Sigmoid colon (tissue), 7 donors: ENCODE measurements at regions of chr17 and their contacts with region 1.

Region 1: GRCh38 chr17:22251498-22251897 is 559.2 kb downstream of the KCNJ18 start:
- DNase-seq: no peak
- H3K4me3 ChIP-seq: no peak overlapping the region
- H3K27ac ChIP-seq: no peak overlapping the region
- H3K4me1 ChIP-seq: no peaks in the 10 kb centered on the region
- H3K27me3 ChIP-seq: no peaks in the 10 kb centered on the region
- CTCF ChIP-seq: no peak
- EP300 ChIP-seq: no peak
- POLR2A ChIP-seq: no peak

Region 2: GRCh38 chr17:22202702-22203101 is 48.8 kb before region 1 on chr17:
- intact Hi-C with region 1: loop called (anchors 10 kb)
- DNase-seq: no peak
- H3K4me3 ChIP-seq: no peak overlapping the region
- H3K27ac ChIP-seq: no peak overlapping the region
- H3K4me1 ChIP-seq: no peaks in the 10 kb centered on the region
- H3K27me3 ChIP-seq: no peaks in the 10 kb centered on the region
- CTCF ChIP-seq: no peak
- EP300 ChIP-seq: no peak
- POLR2A ChIP-seq: no peak